ENCODE measurements at regions of chr16 and their contacts with region 1.

Region 1: DNA sequence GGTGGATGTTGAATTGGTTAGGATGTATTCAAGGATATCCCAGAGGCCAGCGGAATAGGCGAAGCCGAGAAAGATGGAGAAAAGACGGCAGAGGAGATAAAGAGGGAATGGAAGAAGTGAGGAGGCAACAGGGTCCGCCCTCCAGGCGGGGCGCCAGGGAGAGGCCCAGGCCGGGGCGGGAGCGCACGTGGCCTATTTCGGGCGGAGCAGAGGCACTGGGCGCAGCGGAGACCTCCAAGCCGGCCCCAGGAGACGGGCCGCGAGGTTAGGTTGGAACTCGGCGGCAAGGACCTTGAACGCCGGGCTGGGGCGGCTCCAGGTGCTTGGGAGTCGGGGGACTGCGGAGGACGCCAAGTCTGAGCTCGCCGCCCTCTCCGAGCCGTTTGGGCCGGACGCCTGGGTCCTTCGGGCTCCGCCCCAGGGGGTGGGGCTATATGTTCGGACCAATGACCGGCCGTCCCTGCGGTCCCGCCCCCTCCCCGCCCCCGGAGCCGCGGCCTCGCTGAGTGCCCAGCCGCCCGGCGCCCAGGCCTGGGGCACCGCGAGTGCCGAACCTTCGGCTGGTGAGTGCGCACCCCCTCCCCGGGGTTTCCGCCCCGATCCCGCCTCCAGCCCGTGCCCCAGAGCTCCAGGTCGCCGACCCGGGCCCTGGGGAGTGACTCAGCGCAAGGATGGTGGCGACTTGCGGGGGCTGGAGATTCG is at the start of gene ZNF771:
- DNase-seq: peak; percentile 17
- H3K4me3 ChIP-seq: peak within 1 kb of the TSS; percentile 76
- CTCF ChIP-seq: no peak

Region 2: DNA sequence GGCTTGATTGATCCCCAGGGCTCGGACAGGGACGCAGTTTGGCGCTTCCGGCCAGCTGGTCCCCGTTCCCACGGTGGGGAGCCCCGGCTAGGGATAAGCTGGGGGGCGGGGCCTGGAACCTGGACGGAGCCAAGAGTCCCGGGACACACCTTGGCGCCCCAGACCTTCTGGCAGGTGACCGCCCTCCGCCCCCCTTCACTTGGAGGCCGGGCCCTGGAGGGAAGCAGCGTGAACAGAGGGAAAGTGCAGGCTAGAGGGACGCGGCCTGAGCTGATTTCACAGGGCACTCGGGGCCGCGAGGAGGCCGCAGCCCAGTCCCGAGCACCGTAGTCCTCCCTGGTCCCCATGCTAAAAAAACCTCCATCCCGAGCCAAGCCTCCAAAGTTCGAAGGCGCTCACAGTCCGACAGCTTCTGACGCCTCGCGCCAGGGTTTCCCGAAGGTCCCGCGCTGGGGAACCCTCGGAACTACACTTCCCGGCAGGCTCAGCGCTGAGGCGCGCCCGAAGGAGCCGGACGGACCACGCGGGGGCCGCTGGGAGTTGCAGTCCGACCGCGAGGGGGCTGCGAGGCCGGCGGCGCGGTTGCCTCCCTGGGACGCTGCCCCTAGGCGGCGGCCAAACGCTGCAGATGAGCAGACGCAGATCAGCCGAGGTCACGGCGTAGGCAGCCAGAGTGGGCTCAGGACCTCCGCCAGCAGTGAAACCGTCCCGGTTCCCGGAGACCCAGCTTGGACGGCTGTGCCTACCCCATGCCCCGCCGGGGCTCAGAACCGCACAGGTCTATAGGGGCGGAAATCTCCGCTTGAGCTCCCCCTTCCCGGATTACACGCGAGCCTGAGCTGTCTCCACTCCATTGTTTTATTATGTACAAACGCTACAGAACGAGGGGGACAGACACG is 315.5 kb before region 1 on chr16 and contains the start of gene TBX6:
- CTCF ChIA-PET with region 1: interaction called, 37 read pairs
- POLR2A ChIA-PET with region 1: no interaction called
- DNase-seq: peak; percentile 16
- H3K4me3 ChIP-seq: peak within 1 kb of the TSS; percentile 56
- CTCF ChIP-seq: peak; percentile 84

Region 3: DNA sequence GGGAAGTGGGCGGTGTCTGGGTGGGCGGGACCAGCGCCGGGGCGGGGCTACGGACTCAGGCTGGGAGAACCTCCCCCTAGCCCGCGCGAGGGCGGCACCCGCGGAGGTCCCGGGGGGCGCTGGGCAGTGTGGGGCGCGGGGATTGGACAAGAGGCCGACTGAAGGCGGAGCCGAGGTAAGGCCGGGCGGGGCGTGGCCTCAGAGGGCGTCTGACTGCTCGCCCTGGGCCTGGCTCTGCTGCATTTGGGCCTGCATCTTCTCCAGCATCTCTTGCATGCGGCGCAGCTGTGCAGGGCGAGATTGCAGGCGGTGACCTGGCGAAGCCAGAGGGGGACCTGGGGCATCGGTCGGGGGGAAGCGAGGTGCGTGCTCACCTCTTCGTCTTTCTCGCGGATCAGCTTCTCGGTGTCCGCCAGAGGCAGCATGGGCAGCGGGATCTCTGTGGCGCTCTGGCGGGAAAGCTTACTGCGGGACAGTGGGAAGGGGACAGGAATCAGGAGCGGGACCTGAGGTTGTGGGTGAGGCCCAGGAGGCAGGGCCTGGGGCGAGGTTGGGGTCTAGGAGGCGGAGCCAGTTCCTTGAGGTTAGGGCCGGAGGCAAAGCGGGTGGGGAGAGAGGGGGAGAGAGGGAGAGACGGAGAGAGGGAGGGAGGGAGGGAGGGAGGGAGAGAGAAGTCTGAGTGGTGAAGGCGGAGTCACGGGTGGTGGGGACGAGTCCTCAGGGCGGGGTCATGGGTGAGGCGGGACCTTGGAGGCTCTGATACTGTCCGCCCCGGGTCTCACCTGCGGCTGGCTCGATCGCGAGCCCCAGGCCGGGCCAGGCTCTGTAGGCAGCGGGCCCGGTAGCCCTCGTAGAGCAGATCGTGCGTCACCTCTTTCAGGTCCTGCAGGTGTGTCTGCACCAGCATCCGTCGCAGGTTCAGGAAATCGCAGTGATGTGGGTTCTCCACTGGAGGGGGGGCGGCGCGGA is 28.7 kb before region 1 on chr16:
- CTCF ChIA-PET with region 1: interaction called, 12 read pairs
- POLR2A ChIA-PET with region 1: no interaction called
- DNase-seq: peak; percentile 68
- H3K4me3 ChIP-seq: peak overlapping the region; percentile 85
- CTCF ChIP-seq: peak; percentile 27

Region 4: DNA sequence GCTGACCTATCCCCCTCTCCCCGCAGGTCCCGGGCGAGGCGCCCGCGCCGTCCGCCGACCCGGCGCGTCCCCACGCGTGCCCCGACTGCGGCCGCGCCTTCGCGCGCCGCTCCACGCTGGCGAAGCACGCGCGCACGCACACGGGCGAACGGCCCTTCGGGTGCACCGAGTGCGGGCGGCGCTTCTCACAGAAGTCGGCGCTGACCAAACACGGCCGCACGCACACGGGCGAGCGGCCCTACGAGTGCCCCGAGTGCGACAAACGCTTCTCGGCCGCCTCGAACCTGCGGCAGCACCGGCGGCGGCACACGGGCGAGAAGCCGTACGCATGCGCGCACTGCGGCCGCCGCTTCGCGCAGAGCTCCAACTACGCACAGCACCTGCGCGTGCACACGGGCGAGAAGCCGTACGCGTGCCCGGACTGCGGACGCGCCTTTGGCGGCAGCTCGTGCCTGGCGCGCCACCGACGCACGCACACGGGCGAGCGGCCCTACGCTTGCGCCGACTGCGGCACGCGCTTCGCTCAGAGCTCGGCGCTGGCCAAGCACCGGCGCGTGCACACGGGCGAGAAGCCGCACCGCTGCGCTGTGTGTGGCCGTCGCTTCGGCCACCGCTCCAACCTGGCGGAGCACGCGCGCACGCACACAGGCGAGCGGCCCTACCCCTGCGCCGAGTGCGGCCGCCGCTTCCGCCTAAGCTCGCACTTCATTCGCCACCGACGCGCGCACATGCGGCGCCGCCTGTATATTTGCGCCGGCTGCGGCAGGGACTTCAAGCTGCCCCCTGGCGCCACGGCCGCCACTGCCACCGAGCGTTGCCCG is 10.5 kb after region 1 on chr16:
- CTCF ChIA-PET with region 1: interaction called, 94 read pairs
- POLR2A ChIA-PET with region 1: interaction called, 8 read pairs
- DNase-seq: peak; percentile 33
- H3K4me3 ChIP-seq: peak overlapping the region; percentile 62
- CTCF ChIP-seq: peak; percentile 23